Natural killer cell (primary cell): ENCODE measurements at regions of chr10 and their contacts with region 1.

Region 1: GRCh38 chr10:19819419-19820033 is 3.3 kb downstream of the PLXDC2 start:
- DNase-seq: peak in 1 of 2 donors; percentile 27
- ATAC-seq: no peak
- H3K4me3 ChIP-seq: no peak overlapping the region
- H3K4me3 Mint-ChIP-seq: no peak overlapping the region
- H3K27ac ChIP-seq: no peak overlapping the region
- H3K27ac Mint-ChIP-seq: no peak overlapping the region
- H3K4me1 ChIP-seq: peaks cover 12% of the 10 kb centered on the region
- H3K4me1 Mint-ChIP-seq: peaks cover 27 to 48% of the 10 kb centered on the region in 2 donors
- H3K27me3 ChIP-seq: peaks cover 4% of the 10 kb centered on the region
- H3K27me3 Mint-ChIP-seq: peaks cover 3 to 4% of the 10 kb centered on the region in 2 donors
- CTCF ChIP-seq: peak; percentile 88

Region 2: DNA sequence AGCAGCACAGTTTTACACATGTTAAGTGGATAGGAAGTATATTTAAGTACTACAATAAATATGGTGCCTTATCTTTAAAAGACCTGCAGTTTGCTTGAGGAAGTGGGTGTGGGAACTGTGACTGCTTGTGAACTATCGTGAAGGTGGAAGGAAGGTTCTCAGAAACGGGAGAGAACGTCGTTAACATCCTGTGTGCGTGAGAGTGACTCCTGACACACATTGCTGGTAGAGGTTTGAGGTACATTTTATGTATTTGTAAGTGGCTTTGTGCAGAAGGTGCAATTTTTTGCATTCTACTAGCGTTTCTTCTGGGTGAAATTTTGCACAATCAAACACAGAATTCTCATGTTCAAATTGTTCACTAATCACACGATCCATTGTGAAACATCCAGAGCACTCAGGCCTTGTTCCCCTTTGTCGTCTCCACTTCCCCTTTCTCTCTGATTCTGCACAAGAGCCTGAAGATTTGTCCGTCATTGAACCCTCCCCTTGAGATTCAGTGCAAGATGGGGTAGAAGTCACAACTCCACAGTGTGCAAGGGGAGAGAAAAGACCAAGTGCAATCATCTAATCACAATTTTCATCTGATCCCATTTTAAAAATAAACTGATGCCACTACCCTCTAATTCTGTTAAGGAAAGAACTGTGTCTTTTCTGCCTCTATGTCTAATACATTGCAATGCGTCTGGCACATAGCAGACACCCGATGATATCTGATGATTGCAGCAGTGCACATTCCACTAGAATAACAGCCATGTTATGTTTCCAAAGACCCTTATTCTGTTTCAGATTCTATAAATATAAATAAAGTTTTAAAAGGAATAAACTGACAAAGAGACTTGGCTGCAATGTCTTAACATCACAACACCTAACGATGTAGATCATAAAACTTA is 797.6 kb after region 1 on chr10:
- intact Hi-C with region 1: loop called (anchors 10 kb)
- DNase-seq: peak in 1 of 2 donors; percentile 23
- ATAC-seq: peak; percentile 62 to 79 (median 74)
- H3K4me3 ChIP-seq: no peak overlapping the region
- H3K4me3 Mint-ChIP-seq: peak overlapping the region; percentile 67
- H3K27ac ChIP-seq: peak overlapping the region; percentile 54
- H3K27ac Mint-ChIP-seq: peak overlapping the region; percentile 80 to 93
- H3K4me1 ChIP-seq: peaks cover 30% of the 10 kb centered on the region
- H3K4me1 Mint-ChIP-seq: peaks cover 57 to 64% of the 10 kb centered on the region in 2 donors
- H3K27me3 ChIP-seq: no peaks in the 10 kb centered on the region
- H3K27me3 Mint-ChIP-seq: no peaks in the 10 kb centered on the region
- CTCF ChIP-seq: no peak

Region 3: GRCh38 chr10:20768843-20769242 is 949.3 kb after region 1 on chr10:
- intact Hi-C with region 1: loop called (anchors 1 kb)
- DNase-seq: no peak
- ATAC-seq: peak in 2 of 3 donors; percentile 49 to 62
- H3K4me3 ChIP-seq: no peak overlapping the region
- H3K4me3 Mint-ChIP-seq: no peak overlapping the region
- H3K27ac ChIP-seq: no peak overlapping the region
- H3K27ac Mint-ChIP-seq: no peak overlapping the region
- H3K4me1 ChIP-seq: peaks cover 4% of the 10 kb centered on the region
- H3K4me1 Mint-ChIP-seq: peaks cover 22 to 32% of the 10 kb centered on the region in 2 donors
- H3K27me3 ChIP-seq: no peaks in the 10 kb centered on the region
- H3K27me3 Mint-ChIP-seq: no peaks in the 10 kb centered on the region
- CTCF ChIP-seq: peak; percentile 76

Region 4: DNA sequence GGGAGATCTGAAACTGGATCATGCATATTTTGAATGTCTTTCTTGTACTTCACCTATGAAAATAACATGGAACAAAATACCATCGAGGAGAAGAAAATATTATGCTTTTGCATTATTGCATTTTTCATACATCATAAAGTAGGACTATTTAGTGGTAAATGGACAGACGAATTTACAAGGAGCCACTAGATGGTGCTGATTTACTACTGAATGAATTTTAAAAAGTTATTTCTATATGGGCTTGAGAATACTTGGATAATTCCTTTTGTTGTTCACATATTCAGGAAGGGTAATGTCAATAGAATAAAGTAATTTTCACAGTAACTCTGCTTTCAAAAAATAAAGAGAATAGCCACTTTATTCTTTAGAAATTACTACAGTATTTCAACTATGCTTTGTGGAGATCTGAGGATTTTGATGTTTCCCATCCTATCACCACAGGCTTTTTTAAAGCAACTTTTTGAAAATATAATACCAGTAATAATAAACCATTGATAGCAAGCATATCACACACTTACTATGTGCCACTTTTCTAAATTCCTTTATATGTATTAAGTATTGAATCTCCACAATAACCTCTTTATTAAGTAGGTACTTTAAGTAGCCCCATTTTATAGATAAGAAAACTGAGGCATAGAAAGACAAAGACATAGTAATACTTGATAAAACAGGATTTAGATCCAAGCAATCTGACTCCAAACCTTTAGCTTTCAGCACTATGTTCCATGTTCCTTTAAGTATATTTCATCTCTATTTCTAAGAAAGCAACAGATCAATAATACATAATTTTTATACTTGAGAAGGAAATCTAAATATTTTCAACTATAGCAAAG is 1039.0 kb after region 1 on chr10:
- intact Hi-C with region 1: loop called (anchors 5 kb)
- DNase-seq: peak in 1 of 2 donors; percentile 15
- ATAC-seq: no peak
- H3K4me3 ChIP-seq: no peak overlapping the region
- H3K4me3 Mint-ChIP-seq: no peak overlapping the region
- H3K27ac ChIP-seq: no peak overlapping the region
- H3K27ac Mint-ChIP-seq: no peak overlapping the region
- H3K4me1 ChIP-seq: no peaks in the 10 kb centered on the region
- H3K4me1 Mint-ChIP-seq: no peaks in the 10 kb centered on the region
- H3K27me3 ChIP-seq: no peaks in the 10 kb centered on the region
- H3K27me3 Mint-ChIP-seq: peaks cover 9 to 15% of the 10 kb centered on the region in 2 donors
- CTCF ChIP-seq: no peak